ENCODE measurements at regions of chr20 and their contacts with region 1.

Region 1: DNA sequence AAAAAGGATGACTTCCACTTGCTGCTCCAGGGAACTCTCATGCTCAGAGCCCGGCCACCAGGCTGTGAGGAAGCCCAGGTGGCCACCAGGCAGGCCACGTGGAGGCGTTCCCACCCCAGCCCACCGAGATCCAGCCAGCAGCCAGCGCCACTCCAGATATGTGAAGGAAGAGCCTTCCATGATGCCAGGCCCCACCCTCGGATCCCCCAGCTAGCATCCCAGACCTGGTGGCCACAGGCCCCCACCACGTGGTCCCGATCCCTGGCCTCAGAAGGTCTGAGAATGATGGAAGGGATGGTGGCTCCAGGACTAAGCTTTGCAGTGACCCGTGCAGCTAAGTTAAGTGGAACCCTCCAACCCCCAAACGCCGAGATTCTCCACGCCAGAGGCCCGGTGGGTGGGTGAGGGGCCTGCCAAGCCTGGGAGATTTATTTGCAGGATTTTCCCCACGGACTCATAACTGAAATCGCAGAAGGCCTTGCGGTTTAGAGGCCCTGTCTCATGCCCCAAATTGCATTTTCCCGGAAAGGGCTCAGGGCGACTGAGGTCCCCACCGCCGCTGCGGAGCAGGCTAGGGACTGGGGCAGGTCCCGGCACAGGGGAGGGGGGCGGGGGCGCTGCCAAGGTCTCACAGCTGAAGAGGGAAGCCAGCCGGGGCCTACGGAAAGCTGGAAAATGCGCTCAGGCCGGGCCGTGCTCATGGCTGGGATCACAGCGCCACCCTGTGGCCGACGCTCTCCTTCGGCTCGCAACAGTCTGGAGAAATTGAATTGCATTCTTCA is 31.1 kb upstream of the CST7 start:
- DNase-seq: peak; percentile 89
- H3K4me3 ChIP-seq: peak overlapping the region; percentile 12
- H3K27ac ChIP-seq: peak overlapping the region; percentile 41
- H3K4me1 ChIP-seq: peaks cover 13% of the 10 kb centered on the region
- H3K27me3 ChIP-seq: no peaks in the 10 kb centered on the region
- CTCF ChIP-seq: peak; percentile 95

Region 2: DNA sequence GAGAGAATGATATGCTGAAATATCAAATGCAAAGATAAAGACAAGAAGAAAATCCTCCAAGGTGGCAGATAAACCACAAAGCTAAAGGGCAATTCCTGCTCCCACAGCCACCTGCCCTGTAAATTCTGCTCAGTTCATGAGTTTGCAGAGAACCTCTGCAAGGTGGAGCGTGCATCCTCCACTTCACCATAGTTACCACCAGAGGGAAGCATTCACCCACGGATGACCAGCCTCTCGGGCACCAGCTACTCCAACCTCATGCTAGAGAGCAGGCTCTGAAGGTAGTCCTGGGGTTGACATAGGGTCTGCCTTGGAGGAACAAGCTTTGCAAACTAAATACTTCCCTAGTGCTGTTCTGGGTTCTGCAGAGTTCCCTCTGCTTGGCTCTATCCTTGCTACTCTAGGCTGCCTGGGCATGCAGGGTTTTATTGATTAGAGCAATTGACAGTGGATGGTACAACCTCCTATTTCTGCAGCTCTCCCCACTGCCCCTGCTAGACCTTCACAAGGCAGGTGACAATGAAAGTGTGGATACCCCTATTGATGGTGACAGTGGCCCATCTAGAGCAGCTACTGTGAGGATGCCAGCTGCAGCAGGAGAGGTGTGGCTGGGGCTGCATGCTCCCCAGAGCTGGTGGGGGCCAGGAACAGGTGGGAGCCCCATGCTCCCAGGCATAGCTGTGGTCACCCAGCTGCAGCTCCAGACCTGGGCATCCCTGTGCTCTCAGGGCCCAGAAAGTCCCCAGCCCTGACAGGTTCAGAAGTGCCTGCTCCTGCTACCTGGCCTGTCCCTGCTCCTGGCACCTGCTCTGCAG is 980.5 kb before region 1 on chr20:
- CTCF ChIA-PET with region 1: no interaction called
- POLR2A ChIA-PET with region 1: no interaction called
- intact Hi-C with region 1: loop called (anchors 2 kb)
- DNase-seq: peak; percentile 63
- H3K4me3 ChIP-seq: no peak overlapping the region
- H3K27ac ChIP-seq: no peak overlapping the region
- H3K4me1 ChIP-seq: no peaks in the 10 kb centered on the region
- H3K27me3 ChIP-seq: peaks cover 4% of the 10 kb centered on the region
- CTCF ChIP-seq: peak; percentile 73

Region 3: GRCh38 chr20:24112394-24112793 is 805.6 kb before region 1 on chr20:
- CTCF ChIA-PET with region 1: no interaction called
- POLR2A ChIA-PET with region 1: no interaction called
- intact Hi-C with region 1: loop called (anchors 5 kb)
- DNase-seq: no peak
- H3K4me3 ChIP-seq: no peak overlapping the region
- H3K27ac ChIP-seq: no peak overlapping the region
- H3K4me1 ChIP-seq: no peaks in the 10 kb centered on the region
- H3K27me3 ChIP-seq: no peaks in the 10 kb centered on the region
- CTCF ChIP-seq: no peak

Region 4: GRCh38 chr20:24651171-24651975 is 266.6 kb before region 1 on chr20:
- CTCF ChIA-PET with region 1: no interaction called
- POLR2A ChIA-PET with region 1: no interaction called
- intact Hi-C with region 1: loop called (anchors 2 kb)
- DNase-seq: no peak
- H3K4me3 ChIP-seq: no peak overlapping the region
- H3K27ac ChIP-seq: peak overlapping the region; percentile 94
- H3K4me1 ChIP-seq: peaks cover 62% of the 10 kb centered on the region
- H3K27me3 ChIP-seq: no peaks in the 10 kb centered on the region
- CTCF ChIP-seq: no peak

Region 5: GRCh38 chr20:24795436-24795835 is 122.6 kb before region 1 on chr20:
- CTCF ChIA-PET with region 1: no interaction called
- POLR2A ChIA-PET with region 1: no interaction called
- intact Hi-C with region 1: no loop called
- DNase-seq: no peak
- H3K4me3 ChIP-seq: no peak overlapping the region
- H3K27ac ChIP-seq: no peak overlapping the region
- H3K4me1 ChIP-seq: no peaks in the 10 kb centered on the region
- H3K27me3 ChIP-seq: no peaks in the 10 kb centered on the region
- CTCF ChIP-seq: no peak

Measured in A673 (cell line).